ENCODE measurements at regions of chr11 and their contacts with region 1.

Region 1: DNA sequence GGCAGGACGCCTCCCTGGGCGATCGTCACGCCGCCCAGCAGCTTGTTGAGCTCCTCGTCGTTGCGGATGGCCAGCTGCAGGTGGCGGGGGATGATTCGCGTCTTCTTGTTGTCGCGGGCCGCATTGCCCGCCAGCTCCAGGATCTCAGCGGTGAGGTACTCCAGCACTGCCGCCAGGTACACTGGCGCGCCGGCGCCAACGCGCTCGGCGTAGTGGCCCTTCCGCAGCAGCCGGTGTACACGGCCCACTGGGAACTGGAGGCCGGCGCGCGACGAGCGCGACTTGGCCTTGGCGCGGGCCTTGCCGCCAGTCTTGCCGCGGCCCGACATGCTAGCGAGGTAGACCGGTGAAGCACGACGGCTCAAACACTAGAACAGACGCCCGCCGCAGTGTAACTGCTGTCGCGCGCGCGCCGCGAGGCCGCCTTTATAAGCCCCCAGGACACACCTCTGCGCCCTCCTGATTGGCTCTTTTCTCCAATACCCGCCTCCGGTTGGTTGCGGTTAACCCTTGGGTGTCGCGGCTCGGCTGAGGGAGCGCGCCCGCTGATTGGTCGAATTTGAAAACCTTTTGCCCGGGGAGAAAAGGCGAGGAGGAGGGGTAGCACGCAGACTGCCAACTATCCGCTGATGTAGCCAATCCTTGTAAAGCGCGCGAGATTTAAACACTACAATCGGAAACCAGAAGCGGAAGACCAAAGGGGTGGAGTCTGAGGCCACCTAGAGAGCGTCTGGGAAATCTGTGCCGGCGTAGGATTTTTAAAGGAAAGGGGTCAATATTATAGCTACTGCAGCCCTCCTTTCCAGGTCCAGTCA is 6.4 kb downstream of the DPAGT1 start:
- DNase-seq: peak; percentile 99
- ATAC-seq: peak; percentile 96 to 98 (median 96)
- H3K4me3 ChIP-seq: peak overlapping the region; percentile 62 to 88 (median 77)
- H3K27ac ChIP-seq: peak overlapping the region; percentile 60 to 97 (median 89)
- H3K4me1 ChIP-seq: peaks cover 7 to 38% (median 20%) of the 10 kb centered on the region in 12 donors
- H3K27me3 ChIP-seq: no peaks in the 10 kb centered on the region
- CTCF ChIP-seq: peak in 5 of 12 donors; percentile 0 to 30 (median 6)
- POLR2A ChIP-seq: peak; percentile 70 to 98

Region 2: DNA sequence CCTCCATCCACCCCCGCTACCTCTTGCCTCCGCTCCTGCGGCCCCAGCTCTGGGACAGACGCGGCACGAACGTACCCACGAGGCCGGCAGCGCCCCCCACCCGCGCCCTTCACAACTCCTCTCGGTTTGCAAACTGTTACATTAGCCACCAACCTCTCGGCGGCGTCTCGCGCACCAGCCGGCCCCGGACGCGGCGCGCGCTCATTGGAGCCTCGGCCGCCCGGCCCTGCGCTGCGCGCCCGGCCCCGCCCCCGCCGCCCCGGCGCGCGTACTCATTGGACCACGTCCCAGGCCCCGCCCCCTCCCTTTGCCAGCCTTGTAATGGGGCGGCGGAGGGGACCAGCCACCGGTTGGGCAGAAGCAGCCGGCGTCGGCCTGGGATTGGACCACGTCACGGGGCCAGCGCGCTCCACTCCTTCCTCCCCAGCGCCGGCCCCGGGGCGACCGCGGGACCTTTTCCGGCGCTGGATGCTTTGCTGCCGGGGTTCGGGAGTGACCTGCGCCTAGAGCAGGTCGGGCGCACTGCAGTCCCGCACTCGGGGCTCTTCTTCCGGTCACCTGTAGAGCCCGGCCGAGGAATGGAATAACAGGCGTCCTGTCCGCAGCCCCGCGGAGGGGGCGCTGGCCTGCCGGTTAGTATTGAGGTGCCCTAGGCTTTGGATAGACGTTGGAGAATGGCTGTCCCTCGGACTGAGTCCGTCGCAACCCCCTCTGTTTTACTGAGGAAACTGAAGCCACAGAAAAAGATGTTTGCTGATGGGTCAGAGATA is 38.1 kb before region 1 on chr11 and contains the start of gene HYOU1:
- intact Hi-C with region 1: loop called in 1 of 10 experiments (anchors 5 kb)
- DNase-seq: peak; percentile 98 to 100 (median 99)
- ATAC-seq: peak; percentile 96 to 99 (median 97)
- H3K4me3 ChIP-seq: peak within 1 kb of the TSS; percentile 70 to 99 (median 90)
- H3K27ac ChIP-seq: peak within 1 kb of the TSS; percentile 76 to 93 (median 87)
- H3K4me1 ChIP-seq: peaks cover 2 to 26% (median 18%) of the 10 kb centered on the region in 12 donors
- H3K27me3 ChIP-seq: no peaks in the 10 kb centered on the region
- CTCF ChIP-seq: peak in 3 of 12 donors; percentile 12 to 46 (median 26)
- POLR2A ChIP-seq: peak; percentile 72 to 73
- total RNA-seq, gene HYOU1: 45.9 to 104 (median 68.6) TPM

Region 3: GRCh38 chr11:119067371-119068222 is 27.7 kb before region 1 on chr11 and contains the start of gene VPS11:
- intact Hi-C with region 1: loop called in 2 of 10 experiments (anchors 1 to 2 kb)
- DNase-seq: peak; percentile 97 to 99 (median 99)
- ATAC-seq: peak; percentile 98 to 99 (median 98)
- H3K4me3 ChIP-seq: peak within 1 kb of the TSS; percentile 71 to 97 (median 88)
- H3K27ac ChIP-seq: peak within 1 kb of the TSS; percentile 60 to 95 (median 83)
- H3K4me1 ChIP-seq: peaks cover 0 to 39% (median 24%) of the 10 kb centered on the region in 12 donors
- H3K27me3 ChIP-seq: no peaks in the 10 kb centered on the region
- CTCF ChIP-seq: no peak
- POLR2A ChIP-seq: peak in 1 of 2 donors; percentile 69
- total RNA-seq, gene VPS11: 18.7 to 33.3 (median 21.5) TPM

Region 4: DNA sequence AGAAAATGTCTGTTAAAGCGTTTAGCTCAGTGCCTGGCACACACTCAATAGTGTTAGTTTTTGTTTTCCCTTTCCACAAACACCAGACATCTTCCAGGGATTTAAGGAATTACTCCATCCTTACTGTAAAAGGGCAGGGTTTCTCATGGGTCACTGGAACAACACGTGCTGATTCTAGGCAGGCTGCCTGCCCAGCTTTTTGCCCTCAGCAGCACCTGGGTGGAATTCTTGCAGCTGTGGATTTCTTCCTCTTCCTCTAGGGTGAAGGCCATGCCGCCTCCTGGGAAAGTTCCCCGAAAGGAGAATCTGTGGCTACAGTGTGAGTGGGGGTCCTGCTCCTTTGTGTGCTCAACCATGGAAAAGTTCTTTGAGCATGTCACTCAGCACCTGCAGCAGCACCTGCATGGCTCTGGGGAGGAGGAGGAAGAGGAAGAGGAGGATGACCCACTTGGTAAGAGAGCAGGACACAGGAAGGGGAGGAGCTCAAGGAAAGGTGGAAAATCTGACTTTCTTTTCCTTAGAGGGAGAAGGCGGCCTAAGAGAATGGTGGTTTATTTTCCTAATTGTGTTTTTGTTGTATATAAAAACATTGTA is 31.5 kb after region 1 on chr11:
- intact Hi-C with region 1: loop called in 1 of 10 experiments (anchors 5 kb)
- DNase-seq: no peak
- ATAC-seq: no peak
- H3K4me3 ChIP-seq: no peak overlapping the region
- H3K27ac ChIP-seq: peak overlapping the region in 1 of 12 donors; percentile 15
- H3K4me1 ChIP-seq: peaks cover 5 to 38% (median 14%) of the 10 kb centered on the region in 12 donors
- H3K27me3 ChIP-seq: no peaks in the 10 kb centered on the region
- CTCF ChIP-seq: no peak
- POLR2A ChIP-seq: no peak